Mammary epithelial cell (primary cell): ENCODE measurements at regions of chr4 and their contacts with region 1.

Region 1: GRCh38 chr4:10554694-10555093 is 97.5 kb upstream of the ZNF518B start:
- DNase-seq: peak; percentile 61
- H3K4me3 ChIP-seq: no peak overlapping the region
- H3K27ac ChIP-seq: no peak overlapping the region
- H3K4me1 ChIP-seq: no peaks in the 10 kb centered on the region
- H3K27me3 ChIP-seq: no peaks in the 10 kb centered on the region
- CTCF ChIP-seq: peak; percentile 79 to 82

Region 2: DNA sequence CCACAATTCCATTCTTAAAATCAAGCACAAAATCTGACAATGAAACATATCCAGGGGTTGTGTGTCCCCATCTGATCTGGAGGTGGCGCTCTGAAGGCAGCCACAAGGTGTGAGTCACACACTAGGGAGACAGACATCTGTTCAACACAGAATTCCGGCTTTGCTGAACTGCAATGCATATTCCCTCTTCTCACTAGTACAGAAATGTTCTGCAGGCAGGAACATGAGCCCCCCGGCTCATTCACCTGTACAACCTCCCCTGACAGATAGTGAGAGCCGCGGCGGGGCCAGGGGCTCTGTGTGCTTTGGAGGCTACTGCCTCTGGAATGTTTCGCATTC is 480.0 kb before region 1 on chr4:
- CTCF ChIA-PET with region 1: no interaction called
- dilution Hi-C with region 1: no loop called
- in situ Hi-C with region 1: no loop called
- intact Hi-C with region 1: loop called (anchors 2 kb)
- DNase-seq: peak; percentile 46
- H3K4me3 ChIP-seq: no peak overlapping the region
- H3K27ac ChIP-seq: no peak overlapping the region
- H3K4me1 ChIP-seq: no peaks in the 10 kb centered on the region
- H3K27me3 ChIP-seq: no peaks in the 10 kb centered on the region
- CTCF ChIP-seq: peak; percentile 63 to 65

Region 3: GRCh38 chr4:10157478-10158332 is 397.0 kb before region 1 on chr4:
- CTCF ChIA-PET with region 1: no interaction called
- dilution Hi-C with region 1: no loop called
- in situ Hi-C with region 1: loop called (anchors 5 to 10 kb)
- intact Hi-C with region 1: loop called (anchors 1 kb)
- DNase-seq: peak; percentile 71
- H3K4me3 ChIP-seq: no peak overlapping the region
- H3K27ac ChIP-seq: no peak overlapping the region
- H3K4me1 ChIP-seq: peaks cover 14% of the 10 kb centered on the region
- H3K27me3 ChIP-seq: no peaks in the 10 kb centered on the region
- CTCF ChIP-seq: peak; percentile 85 to 91

Region 4: GRCh38 chr4:10164877-10165283 is 389.8 kb before region 1 on chr4:
- CTCF ChIA-PET with region 1: no interaction called
- dilution Hi-C with region 1: no loop called
- in situ Hi-C with region 1: loop called (anchors 5 to 10 kb)
- intact Hi-C with region 1: no loop called
- DNase-seq: no peak
- H3K4me3 ChIP-seq: no peak overlapping the region
- H3K27ac ChIP-seq: no peak overlapping the region
- H3K4me1 ChIP-seq: peaks cover 6% of the 10 kb centered on the region
- H3K27me3 ChIP-seq: no peaks in the 10 kb centered on the region
- CTCF ChIP-seq: peak; percentile 74 to 76

Region 5: DNA sequence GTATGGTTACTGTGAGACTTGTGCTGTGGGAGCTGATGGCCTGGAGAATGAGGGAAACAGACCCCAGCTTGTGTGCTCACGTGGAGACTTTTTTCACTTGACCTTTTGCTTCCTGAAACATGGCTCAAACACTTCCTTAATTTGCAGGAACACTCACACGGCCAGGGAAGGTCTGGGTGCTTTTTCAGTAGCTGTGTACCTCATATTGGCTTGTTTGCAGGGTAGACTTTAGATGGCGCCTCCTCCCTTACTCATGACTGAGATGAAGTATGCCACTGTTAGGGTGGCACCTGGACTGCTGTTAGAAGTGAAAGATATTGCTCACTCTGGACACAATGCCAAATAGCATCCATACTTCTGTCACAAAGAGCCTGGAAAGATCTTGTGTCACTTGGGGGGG is 362.4 kb before region 1 on chr4:
- CTCF ChIA-PET with region 1: no interaction called
- dilution Hi-C with region 1: no loop called
- in situ Hi-C with region 1: no loop called
- intact Hi-C with region 1: loop called (anchors 1 kb)
- DNase-seq: peak; percentile 46
- H3K4me3 ChIP-seq: no peak overlapping the region
- H3K27ac ChIP-seq: no peak overlapping the region
- H3K4me1 ChIP-seq: no peaks in the 10 kb centered on the region
- H3K27me3 ChIP-seq: no peaks in the 10 kb centered on the region
- CTCF ChIP-seq: peak; percentile 35 to 66

Region 6: GRCh38 chr4:10413177-10413576 is 141.5 kb before region 1 on chr4:
- CTCF ChIA-PET with region 1: no interaction called
- dilution Hi-C with region 1: loop called (anchors 5 kb)
- in situ Hi-C with region 1: no loop called
- intact Hi-C with region 1: no loop called
- DNase-seq: no peak
- H3K4me3 ChIP-seq: no peak overlapping the region
- H3K27ac ChIP-seq: no peak overlapping the region
- H3K4me1 ChIP-seq: no peaks in the 10 kb centered on the region
- H3K27me3 ChIP-seq: no peaks in the 10 kb centered on the region
- CTCF ChIP-seq: no peak

Region 7: DNA sequence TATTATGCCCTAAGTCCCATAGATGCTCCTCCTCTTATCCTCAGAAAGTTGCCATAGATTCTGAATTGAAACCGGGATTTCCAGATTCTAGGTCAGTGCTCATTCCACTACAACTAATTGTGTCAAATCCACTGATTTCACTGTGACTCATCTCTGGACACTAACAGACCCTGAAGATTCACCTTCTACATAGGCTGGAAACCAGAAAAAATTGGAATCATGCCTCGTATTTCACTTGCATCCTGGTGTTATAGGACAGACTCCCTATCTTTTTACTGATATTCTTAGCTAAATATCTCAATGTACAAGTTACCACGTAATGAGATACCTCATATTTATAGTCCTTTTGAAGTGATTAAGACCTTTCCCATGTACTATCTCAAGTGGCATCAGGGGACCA is 93.2 kb after region 1 on chr4:
- CTCF ChIA-PET with region 1: no interaction called
- dilution Hi-C with region 1: no loop called
- in situ Hi-C with region 1: no loop called
- intact Hi-C with region 1: no loop called
- DNase-seq: peak; percentile 48
- H3K4me3 ChIP-seq: no peak overlapping the region
- H3K27ac ChIP-seq: no peak overlapping the region
- H3K4me1 ChIP-seq: peaks cover 10% of the 10 kb centered on the region
- H3K27me3 ChIP-seq: no peaks in the 10 kb centered on the region
- CTCF ChIP-seq: no peak

Region 8: GRCh38 chr4:11954093-11954492 is 1399.4 kb after region 1 on chr4:
- CTCF ChIA-PET with region 1: no interaction called
- dilution Hi-C with region 1: no loop called
- in situ Hi-C with region 1: no loop called
- intact Hi-C with region 1: loop called (anchors 10 kb)
- DNase-seq: peak; percentile 8
- H3K4me3 ChIP-seq: no peak overlapping the region
- H3K27ac ChIP-seq: no peak overlapping the region
- H3K4me1 ChIP-seq: no peaks in the 10 kb centered on the region
- H3K27me3 ChIP-seq: no peaks in the 10 kb centered on the region
- CTCF ChIP-seq: peak; percentile 37 to 60